ENCODE measurements at regions of chr6 and their contacts with region 1.

Region 1: GRCh38 chr6:117188627-117189201 is 76.6 kb upstream of the VGLL2 start:
- DNase-seq: no peak
- ATAC-seq: no peak
- H3K4me3 Mint-ChIP-seq: no peak overlapping the region
- H3K27ac Mint-ChIP-seq: no peak overlapping the region
- H3K4me1 Mint-ChIP-seq: no peaks in the 10 kb centered on the region
- H3K27me3 Mint-ChIP-seq: no peaks in the 10 kb centered on the region

Region 2: DNA sequence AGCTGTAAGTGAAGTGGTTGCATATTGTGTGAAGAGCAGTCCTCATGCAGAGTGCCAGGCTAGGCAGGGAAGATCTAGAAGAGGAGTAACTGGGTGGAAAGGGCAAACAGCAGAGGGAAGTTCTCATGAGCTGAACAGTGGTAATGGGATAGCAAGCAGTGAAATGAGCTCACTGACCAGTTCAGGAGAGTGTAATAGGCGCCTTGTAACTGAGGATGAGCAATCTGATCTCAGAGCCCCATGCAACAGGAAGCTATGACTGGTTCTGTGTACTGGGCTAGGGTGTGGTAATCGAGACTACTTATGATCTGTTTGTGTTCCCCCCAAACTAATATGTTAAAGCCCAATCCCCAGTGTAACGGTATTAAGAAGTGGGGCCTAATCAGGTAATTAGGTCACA is 213.1 kb before region 1 on chr6:
- CTCF ChIA-PET with region 1: no interaction called
- POLR2A ChIA-PET with region 1: no interaction called
- intact Hi-C with region 1: loop called in 1 of 2 experiments (anchors 2 kb)
- DNase-seq: no peak
- ATAC-seq: no peak
- H3K4me3 Mint-ChIP-seq: no peak overlapping the region
- H3K27ac Mint-ChIP-seq: no peak overlapping the region
- H3K4me1 Mint-ChIP-seq: no peaks in the 10 kb centered on the region
- H3K27me3 Mint-ChIP-seq: peaks cover 10% of the 10 kb centered on the region

Region 3: GRCh38 chr6:117829594-117830319 is 641.0 kb after region 1 on chr6:
- CTCF ChIA-PET with region 1: no interaction called
- POLR2A ChIA-PET with region 1: no interaction called
- intact Hi-C with region 1: no loop called
- DNase-seq: no peak
- ATAC-seq: no peak
- H3K4me3 Mint-ChIP-seq: no peak overlapping the region
- H3K27ac Mint-ChIP-seq: no peak overlapping the region
- H3K4me1 Mint-ChIP-seq: no peaks in the 10 kb centered on the region
- H3K27me3 Mint-ChIP-seq: peaks cover 28% of the 10 kb centered on the region

Measured in activated CD4-positive, alpha-beta T cell treated with anti-CD3 and anti-CD28 coated beads for 36 hours (primary cell).